T-cell (primary cell): ENCODE measurements at regions of chr2 and their contacts with region 1.

Region 1: GRCh38 chr2:28094739-28095138 is 204.2 kb downstream of the BABAM2 start:
- DNase-seq: no peak
- ATAC-seq: no peak
- H3K4me3 ChIP-seq: no peak overlapping the region
- H3K4me3 Mint-ChIP-seq: no peak overlapping the region
- H3K27ac ChIP-seq: no peak overlapping the region
- H3K27ac Mint-ChIP-seq: no peak overlapping the region
- H3K4me1 ChIP-seq: no peaks in the 10 kb centered on the region
- H3K4me1 Mint-ChIP-seq: peaks cover 0 to 4% (median 0%) of the 10 kb centered on the region in 3 donors
- H3K27me3 ChIP-seq: no peaks in the 10 kb centered on the region
- H3K27me3 Mint-ChIP-seq: no peaks in the 10 kb centered on the region

Region 2: GRCh38 chr2:27996156-27996922 is 98.4 kb before region 1 on chr2:
- CTCF ChIA-PET with region 1: no interaction called
- POLR2A ChIA-PET with region 1: interaction called in 1 of 2 experiments, 13 read pairs
- DNase-seq: no peak
- ATAC-seq: no peak
- H3K4me3 ChIP-seq: no peak overlapping the region
- H3K4me3 Mint-ChIP-seq: no peak overlapping the region
- H3K27ac ChIP-seq: no peak overlapping the region
- H3K27ac Mint-ChIP-seq: no peak overlapping the region
- H3K4me1 ChIP-seq: no peaks in the 10 kb centered on the region
- H3K4me1 Mint-ChIP-seq: peaks cover 17 to 18% (median 17%) of the 10 kb centered on the region in 3 donors
- H3K27me3 ChIP-seq: no peaks in the 10 kb centered on the region
- H3K27me3 Mint-ChIP-seq: no peaks in the 10 kb centered on the region